Caco-2 (cell line): ENCODE measurements at regions of chr6 and their contacts with region 1.

Region 1: GRCh38 chr6:31971993-31972708 is at the start of gene DXO:
- DNase-seq: peak; percentile 97 to 98
- H3K4me3 ChIP-seq: peak within 1 kb of the TSS; percentile 76
- H3K4me3 Mint-ChIP-seq: peak within 1 kb of the TSS; percentile 67
- H3K27ac Mint-ChIP-seq: peak within 1 kb of the TSS; percentile 82
- H3K4me1 ChIP-seq: peaks cover 5% of the 10 kb centered on the region; the same call in 1 of the 2 replicates
- H3K4me1 Mint-ChIP-seq: peaks cover 21% of the 10 kb centered on the region
- H3K27me3 ChIP-seq: no peaks in the 10 kb centered on the region
- H3K27me3 Mint-ChIP-seq: no peaks in the 10 kb centered on the region
- CTCF ChIP-seq: no peak
- total RNA-seq, gene DXO: 22.4 and 23.7 TPM in 2 replicates

Region 2: DNA sequence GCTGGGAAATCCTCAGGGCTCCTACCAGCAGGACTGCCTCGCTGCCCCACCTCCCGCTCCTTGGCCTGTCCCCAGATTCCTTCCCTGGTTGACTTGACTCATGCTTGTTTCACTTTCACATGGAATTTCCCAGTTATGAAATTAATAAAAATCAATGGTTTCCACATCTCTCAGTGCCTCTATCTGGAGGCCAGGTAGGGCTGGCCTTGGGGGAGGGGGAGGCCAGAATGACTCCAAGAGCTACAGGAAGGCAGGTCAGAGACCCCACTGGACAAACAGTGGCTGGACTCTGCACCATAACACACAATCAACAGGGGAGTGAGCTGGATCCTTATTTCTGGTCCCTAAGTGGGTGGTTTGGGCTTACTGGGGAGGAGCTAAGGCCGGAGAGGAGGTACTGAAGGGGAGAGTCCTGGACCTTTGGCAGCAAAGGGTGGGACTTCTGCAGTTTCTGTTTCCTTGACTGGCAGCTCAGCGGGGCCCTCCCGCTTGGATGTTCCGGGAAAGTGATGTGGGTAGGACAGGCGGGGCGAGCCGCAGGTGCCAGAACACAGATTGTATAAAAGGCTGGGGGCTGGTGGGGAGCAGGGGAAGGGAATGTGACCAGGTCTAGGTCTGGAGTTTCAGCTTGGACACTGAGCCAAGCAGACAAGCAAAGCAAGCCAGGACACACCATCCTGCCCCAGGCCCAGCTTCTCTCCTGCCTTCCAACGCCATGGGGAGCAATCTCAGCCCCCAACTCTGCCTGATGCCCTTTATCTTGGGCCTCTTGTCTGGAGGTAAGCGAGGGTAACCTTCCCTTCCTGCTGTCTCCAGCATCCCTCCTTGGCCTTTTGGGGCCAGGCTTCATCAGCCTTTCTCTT is 26.4 kb before region 1 on chr6 and contains the start of gene CFB:
- CTCF ChIA-PET with region 1: no interaction called
- POLR2A ChIA-PET with region 1: interaction called, 12 read pairs
- intact Hi-C with region 1: no loop called
- DNase-seq: peak; percentile 88 to 93
- H3K4me3 ChIP-seq: peak within 1 kb of the TSS; percentile 33
- H3K4me3 Mint-ChIP-seq: peak within 1 kb of the TSS; percentile 58
- H3K27ac Mint-ChIP-seq: peak within 1 kb of the TSS; percentile 94
- H3K4me1 ChIP-seq: peaks cover 41% of the 10 kb centered on the region
- H3K4me1 Mint-ChIP-seq: peaks cover 49% of the 10 kb centered on the region
- H3K27me3 ChIP-seq: no peaks in the 10 kb centered on the region
- H3K27me3 Mint-ChIP-seq: no peaks in the 10 kb centered on the region
- CTCF ChIP-seq: no peak
- total RNA-seq, gene CFB: 31.0 and 32.1 TPM in 2 replicates

Region 3: DNA sequence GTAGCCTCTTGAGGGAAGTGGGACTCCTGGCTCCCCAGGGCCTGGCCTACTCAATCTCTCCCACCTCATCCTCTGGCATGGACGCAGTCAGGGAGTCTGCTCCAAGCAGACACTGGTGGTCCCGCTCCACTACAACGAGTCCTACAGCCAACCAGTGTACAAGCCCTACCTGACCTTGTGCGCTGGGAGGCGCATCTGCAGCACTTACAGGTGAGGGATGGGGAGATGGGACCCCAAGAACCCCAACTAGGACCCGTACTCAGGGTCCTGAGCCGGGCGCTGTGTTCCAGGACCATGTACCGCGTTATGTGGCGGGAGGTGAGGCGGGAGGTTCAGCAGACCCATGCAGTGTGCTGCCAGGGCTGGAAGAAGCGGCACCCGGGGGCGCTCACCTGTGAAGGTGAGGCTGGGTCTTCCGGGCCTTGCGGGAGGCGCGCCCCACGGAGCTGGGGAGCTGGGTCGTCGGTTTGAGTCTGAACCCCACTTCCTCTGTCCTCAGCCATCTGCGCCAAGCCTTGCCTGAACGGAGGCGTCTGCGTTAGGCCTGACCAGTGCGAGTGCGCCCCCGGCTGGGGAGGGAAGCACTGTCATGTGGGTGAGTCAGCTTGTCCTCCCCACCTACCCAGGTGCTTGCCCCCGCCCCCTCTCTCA is 194.4 kb after region 1 on chr6:
- CTCF ChIA-PET with region 1: no interaction called
- POLR2A ChIA-PET with region 1: no interaction called
- intact Hi-C with region 1: no loop called
- DNase-seq: no peak
- H3K4me3 ChIP-seq: no peak overlapping the region
- H3K4me3 Mint-ChIP-seq: no peak overlapping the region
- H3K27ac Mint-ChIP-seq: no peak overlapping the region
- H3K4me1 ChIP-seq: peaks cover 24% of the 10 kb centered on the region
- H3K4me1 Mint-ChIP-seq: peaks cover 14% of the 10 kb centered on the region
- H3K27me3 ChIP-seq: no peaks in the 10 kb centered on the region
- H3K27me3 Mint-ChIP-seq: no peaks in the 10 kb centered on the region
- CTCF ChIP-seq: no peak